ENCODE measurements at regions of chr1 and their contacts with region 1.

Region 1: DNA sequence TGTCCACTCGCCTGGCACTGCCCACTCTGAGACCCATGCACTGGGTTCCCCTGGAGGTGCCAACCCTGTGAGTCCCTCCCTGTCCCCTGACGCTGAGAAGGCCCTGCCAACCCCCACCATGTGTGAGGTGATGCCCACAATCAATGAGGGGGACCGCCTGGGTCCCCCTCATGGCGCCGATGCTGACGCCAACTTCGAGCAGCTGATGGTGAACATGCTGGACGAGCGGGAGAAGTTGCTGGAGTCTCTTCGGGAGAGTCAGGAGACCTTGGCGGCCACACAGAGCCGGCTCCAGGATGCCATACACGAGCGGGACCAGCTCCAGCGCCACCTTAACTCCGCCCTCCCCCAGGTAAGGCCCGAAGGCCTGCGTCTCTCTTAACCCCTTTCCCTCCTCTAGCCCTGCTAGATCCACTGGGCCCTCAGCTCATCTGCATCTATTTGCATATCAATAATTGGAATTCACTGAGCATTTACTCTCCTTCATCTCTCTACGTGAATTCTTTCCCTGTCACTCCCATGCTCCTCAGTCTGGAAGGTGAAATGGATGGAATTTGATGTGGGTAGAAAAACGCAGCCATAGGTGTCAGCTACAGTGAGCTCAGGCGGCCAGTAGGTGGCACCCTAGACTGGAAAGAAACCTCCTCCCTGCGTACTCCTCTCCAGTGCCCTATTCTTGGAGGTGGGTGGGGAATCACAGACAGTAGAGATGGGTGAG is 12.8 kb downstream of the PPFIA4 start:
- DNase-seq: peak; percentile 66
- H3K4me3 ChIP-seq: no peak overlapping the region
- H3K27ac ChIP-seq: no peak overlapping the region
- H3K4me1 ChIP-seq: no peaks in the 10 kb centered on the region
- H3K27me3 ChIP-seq: peaks cover 2% of the 10 kb centered on the region
- CTCF ChIP-seq: peak; percentile 67 to 90 (median 80)
- POLR2A ChIP-seq: no peak

Region 2: GRCh38 chr1:202915146-202915545 is 123.9 kb before region 1 on chr1:
- intact Hi-C with region 1: no loop called
- DNase-seq: no peak
- H3K4me3 ChIP-seq: no peak overlapping the region
- H3K27ac ChIP-seq: no peak overlapping the region
- H3K4me1 ChIP-seq: no peaks in the 10 kb centered on the region
- H3K27me3 ChIP-seq: no peaks in the 10 kb centered on the region
- CTCF ChIP-seq: no peak
- POLR2A ChIP-seq: no peak

Region 3: DNA sequence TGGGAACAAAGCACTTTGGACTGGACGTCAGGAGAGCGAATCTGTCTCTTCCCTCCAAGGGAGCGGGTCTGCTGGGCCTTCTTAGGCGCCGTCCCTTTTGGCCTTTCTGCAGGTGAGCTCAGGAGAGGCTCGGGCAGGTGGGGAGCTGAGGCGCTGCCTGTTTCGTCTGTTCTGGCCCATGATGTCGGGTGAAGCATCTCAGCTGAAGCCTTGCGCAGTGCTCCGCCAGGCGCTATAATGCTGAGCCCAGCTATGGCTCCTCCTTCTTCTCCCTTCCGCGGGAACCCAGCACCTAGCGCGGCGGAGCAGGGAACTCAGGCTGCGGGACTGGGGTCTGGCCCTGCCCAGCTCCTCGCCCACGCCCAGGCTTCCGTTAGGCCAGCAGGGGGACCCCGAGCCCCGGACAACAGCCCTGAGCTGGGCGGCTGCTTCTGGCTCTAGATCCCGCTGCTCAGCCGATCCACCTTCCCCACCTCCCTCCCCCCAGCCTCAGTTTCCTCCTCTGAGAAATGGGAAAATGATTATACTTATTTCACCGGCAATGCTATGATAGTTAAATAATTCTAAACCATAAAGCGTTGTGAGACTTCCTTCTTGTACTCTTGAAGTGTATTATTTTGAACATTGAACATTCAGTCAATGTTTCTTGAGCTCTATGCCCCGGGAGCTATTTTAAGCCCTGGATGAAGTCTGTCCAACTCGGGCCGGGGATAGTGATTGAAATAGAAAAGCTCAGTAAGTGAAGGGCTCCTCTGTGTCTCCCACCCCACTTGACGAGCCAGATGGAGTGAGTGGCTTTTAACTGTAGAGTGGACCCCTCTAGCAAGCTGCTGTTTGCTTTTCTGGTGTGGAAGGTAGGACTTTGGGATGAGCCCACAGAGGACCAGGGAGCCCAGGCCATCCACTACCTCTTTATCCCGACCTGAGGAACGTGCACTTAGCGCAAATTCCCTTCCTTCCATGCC is 78.8 kb after region 1 on chr1:
- intact Hi-C with region 1: loop called (anchors 2 kb)
- DNase-seq: peak; percentile 39
- H3K4me3 ChIP-seq: no peak overlapping the region
- H3K27ac ChIP-seq: no peak overlapping the region
- H3K4me1 ChIP-seq: no peaks in the 10 kb centered on the region
- H3K27me3 ChIP-seq: peaks cover 6% of the 10 kb centered on the region
- CTCF ChIP-seq: peak; percentile 15 to 79 (median 70)
- POLR2A ChIP-seq: no peak

Region 4: DNA sequence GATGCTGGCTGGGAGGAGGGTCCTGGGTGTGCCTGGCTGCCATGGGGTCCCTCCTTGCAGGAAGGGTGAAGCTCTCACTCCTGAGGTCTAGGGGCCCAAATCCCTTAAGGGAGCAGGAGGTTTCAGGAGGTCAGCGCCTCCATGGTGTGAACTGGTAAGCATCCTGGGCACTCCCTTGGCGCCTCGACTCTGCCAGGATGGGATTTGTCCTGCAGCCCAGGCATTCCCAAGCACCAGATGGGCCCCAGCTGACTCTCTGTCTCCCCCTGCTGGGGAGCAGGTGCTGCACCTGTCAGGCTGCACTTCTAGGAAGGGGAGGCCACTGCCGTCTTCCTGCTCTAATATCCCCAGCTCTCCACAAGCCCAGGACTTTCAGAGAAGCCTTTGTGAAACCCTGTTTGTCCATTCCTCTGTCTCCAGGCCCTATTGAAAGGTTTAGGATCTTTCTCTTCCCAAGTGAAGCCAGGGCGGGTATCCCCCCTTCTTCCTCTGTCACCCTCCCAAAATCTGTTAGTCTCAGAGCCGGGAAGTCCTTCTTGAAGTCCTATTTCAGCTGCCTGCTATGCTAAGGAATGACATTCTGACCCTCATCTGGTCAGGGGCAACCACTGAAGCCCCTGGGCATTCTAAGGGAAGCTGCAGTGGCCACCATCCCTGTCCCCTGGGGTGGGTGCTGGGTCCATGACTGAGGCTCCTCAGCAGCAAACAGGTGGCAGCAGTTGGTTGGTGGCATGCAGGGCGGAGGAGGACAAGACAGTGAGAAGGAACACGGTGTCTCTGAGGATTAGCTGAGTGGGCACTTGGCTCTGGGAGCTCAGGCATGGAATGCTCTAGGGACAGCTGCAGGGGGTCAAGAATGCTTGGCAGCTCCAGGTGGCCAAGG is 133.3 kb after region 1 on chr1:
- intact Hi-C with region 1: loop called (anchors 2 kb)
- DNase-seq: peak; percentile 25
- H3K4me3 ChIP-seq: no peak overlapping the region
- H3K27ac ChIP-seq: no peak overlapping the region
- H3K4me1 ChIP-seq: no peaks in the 10 kb centered on the region
- H3K27me3 ChIP-seq: no peaks in the 10 kb centered on the region
- CTCF ChIP-seq: peak; percentile 45 to 81 (median 62)
- POLR2A ChIP-seq: no peak

Region 5: GRCh38 chr1:203216274-203217138 is 177.5 kb after region 1 on chr1:
- intact Hi-C with region 1: loop called (anchors 1 kb)
- DNase-seq: peak; percentile 51
- H3K4me3 ChIP-seq: no peak overlapping the region
- H3K27ac ChIP-seq: no peak overlapping the region
- H3K4me1 ChIP-seq: no peaks in the 10 kb centered on the region
- H3K27me3 ChIP-seq: no peaks in the 10 kb centered on the region
- CTCF ChIP-seq: peak; percentile 34 to 81 (median 76)
- POLR2A ChIP-seq: no peak